ENCODE measurements at regions of chr3 and their contacts with region 1.

Region 1: DNA sequence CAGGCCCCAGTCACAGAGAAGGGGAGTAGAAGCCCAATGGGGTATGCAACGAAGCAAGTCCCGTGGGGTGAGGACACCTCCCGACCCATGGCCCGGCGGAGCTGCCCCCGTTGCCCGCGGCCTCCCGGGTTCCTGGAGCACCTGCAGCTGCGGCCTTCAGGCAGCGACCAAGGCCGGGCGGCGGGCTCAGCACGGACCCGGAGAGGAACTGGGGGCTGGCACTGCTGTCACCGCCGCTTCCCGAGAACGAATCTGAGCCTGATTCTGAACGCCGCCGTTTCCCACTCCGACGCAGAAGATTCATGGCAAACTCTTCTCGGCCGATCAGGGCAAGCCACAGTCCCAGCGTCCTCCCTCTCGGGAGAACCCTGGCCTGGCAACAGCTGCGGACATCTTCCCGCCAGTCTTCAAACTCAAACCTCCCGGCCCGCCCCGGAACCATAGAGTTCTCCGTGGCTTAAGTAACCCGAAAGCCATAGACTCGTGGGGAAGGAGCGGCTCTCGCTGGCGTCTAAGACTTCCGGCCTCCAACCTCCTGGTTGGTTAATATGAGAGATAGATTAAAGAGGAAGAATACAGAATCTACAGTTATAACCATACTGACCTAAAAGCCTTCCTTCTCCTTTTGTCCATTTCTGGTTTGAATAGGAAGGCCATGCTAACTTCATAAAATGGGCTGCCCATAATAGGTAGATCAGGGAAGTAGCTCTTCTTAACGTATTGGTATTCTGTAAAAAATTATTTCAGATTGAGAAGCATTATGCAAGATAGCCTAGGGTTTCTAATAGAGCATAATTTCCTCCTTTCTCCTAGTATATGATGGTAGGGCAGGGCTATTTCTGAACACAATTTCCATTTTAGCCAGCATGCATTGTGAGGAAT is at the start of gene POLQ:
- DNase-seq: peak; percentile 82 to 88
- ATAC-seq: peak; percentile 99
- H3K4me3 ChIP-seq: peak within 1 kb of the TSS; percentile 60 to 80 (median 68)
- H3K27ac ChIP-seq: peak within 1 kb of the TSS; percentile 70 to 87 (median 78)
- H3K4me1 ChIP-seq: peaks cover 3 to 7% of the 10 kb centered on the region in 2 donors
- H3K27me3 ChIP-seq: no peaks in the 10 kb centered on the region
- CTCF ChIP-seq: no peak
- POLR2A ChIP-seq: no peak
- total RNA-seq, gene POLQ: 0.07 to 0.24 (median 0.18) TPM in 3 of 4 donors, not detected in the other

Region 2: DNA sequence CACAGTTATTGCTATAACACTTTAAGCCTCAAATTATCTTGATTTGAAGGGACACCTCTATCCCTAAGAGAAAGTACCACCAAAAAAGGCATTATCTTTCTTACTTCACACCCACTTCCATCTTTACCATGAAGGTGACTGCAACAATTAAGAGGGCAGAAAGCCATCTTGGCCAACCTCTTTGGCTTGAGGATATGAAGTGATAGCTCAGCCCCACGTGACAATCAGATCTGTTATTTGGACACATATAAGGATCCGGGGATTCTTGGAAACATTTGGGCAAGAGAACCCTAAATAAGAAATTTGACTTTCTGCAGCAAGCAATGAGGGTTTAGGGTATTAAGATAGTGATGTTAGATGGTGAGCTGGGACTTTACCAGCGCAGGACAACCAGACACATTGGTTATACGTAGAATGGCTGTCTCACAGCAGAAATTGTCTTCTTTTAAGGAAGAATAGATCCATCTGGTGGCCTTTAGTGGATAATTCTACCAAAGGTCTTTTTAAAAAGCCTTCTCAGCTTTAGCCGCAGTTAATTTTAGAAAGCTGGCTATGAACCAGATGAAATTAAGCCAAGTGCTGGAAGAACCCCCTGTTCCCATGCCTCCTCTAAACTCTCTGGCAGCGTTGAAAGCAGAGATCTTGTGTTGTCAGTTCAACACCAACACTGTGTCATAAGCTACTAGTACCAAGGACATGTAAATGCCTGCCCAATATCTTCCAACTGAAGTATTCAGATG is 102.6 kb after region 1 on chr3:
- in situ Hi-C with region 1: no loop called
- intact Hi-C with region 1: loop called (anchors 1 kb)
- DNase-seq: peak; percentile 66 to 74
- ATAC-seq: peak; percentile 99
- H3K4me3 ChIP-seq: peak overlapping the region in 2 of 4 donors; percentile 16 to 21
- H3K27ac ChIP-seq: peak overlapping the region; percentile 83 to 87 (median 84)
- H3K4me1 ChIP-seq: peaks cover 17 to 21% of the 10 kb centered on the region in 2 donors
- H3K27me3 ChIP-seq: no peaks in the 10 kb centered on the region
- CTCF ChIP-seq: peak in 2 of 5 experiments; percentile 13 to 19
- POLR2A ChIP-seq: no peak

Region 3: DNA sequence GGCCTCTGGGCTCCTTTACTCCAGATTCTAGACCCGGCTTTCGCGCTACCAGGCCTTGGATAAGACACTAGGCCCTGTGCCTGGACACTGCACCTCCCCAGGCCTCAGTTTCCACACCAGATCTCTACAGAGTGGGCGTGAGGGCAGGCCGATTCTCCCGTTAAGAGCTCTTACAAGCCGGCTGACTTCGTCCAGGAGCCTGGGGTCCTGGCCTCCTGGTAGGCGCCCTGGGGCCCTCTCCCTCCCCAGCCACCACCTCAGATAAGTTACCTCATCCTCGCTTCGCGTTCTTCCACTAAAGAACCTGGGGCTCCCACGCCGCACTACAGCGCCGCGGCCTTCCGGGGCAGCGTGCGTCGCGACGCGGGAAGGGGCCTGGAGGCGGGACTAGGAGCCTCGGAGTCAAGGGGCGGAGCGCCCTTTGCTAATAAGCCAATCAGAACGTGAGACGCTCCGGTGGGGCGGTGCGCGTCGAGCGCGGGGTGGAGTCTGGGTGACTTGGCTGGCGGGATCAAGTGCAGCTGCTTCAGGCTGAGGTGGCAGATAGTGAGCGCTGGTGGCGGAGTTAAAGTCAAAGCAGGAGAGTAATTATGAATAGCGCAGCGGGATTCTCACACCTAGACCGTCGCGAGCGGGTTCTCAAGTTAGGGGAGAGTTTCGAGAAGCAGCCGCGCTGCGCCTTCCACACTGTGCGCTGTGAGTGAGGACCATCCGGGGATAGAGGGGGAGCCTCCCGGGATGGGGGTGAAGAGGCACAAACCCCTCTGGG is 289.1 kb after region 1 on chr3 and contains the starts of genes EAF2 and IQCB1:
- in situ Hi-C with region 1: loop called in 2 of 4 experiments (anchors 25 kb)
- intact Hi-C with region 1: loop called (anchors 2 kb)
- DNase-seq: peak; percentile 92 to 94
- ATAC-seq: peak; percentile 98 to 99
- H3K4me3 ChIP-seq: peak within 1 kb of the TSS; percentile 73 to 96 (median 77)
- H3K27ac ChIP-seq: peak within 1 kb of the TSS; percentile 80 to 91 (median 88)
- H3K4me1 ChIP-seq: peaks cover 13 to 22% of the 10 kb centered on the region in 2 donors
- H3K27me3 ChIP-seq: no peaks in the 10 kb centered on the region
- CTCF ChIP-seq: no peak
- POLR2A ChIP-seq: peak; percentile 79 to 92
- total RNA-seq, gene EAF2: 2.6 to 5.7 (median 3.6) TPM
- total RNA-seq, gene IQCB1: 8.8 to 14.0 (median 11.8) TPM

Region 4: DNA sequence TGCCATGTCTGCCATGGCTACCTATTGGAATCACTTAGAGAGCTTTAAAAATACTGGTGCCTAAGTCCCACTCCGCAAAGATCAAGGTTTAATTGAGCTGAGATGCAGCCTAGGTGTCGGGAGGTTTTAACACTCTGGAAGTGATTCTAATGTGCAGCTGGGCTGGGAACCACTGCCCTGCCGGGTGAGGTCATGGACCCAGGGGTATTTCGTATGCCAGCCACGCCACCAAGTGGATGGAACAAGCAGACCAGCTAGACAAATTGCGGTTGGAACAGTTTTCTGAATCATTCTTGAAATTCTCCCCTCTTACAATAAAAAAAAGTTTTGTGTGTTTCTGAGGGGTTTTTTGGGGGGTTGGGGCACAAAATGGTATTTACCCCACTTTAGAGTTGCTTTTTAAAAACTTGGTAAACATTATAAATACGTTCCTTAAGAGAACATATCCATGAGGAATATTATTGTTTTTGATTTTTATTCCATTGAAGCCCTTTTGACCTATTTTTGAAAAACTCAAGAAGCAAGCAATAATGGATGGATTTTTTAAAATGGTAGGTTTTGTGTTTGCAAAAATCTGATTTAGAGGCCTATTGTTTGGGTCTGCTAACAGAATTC is 713.0 kb after region 1 on chr3:
- in situ Hi-C with region 1: loop called in 2 of 4 experiments (anchors 5 to 10 kb)
- intact Hi-C with region 1: no loop called
- DNase-seq: peak; percentile 10 to 23
- ATAC-seq: peak in 1 of 2 donors; percentile 51
- H3K4me3 ChIP-seq: no peak overlapping the region
- H3K27ac ChIP-seq: no peak overlapping the region
- H3K4me1 ChIP-seq: peaks cover 0 to 5% of the 10 kb centered on the region in 2 donors
- H3K27me3 ChIP-seq: no peaks in the 10 kb centered on the region
- CTCF ChIP-seq: peak in 2 of 5 experiments; percentile 50 to 51
- POLR2A ChIP-seq: no peak

Region 5: GRCh38 chr3:122356415-122356814 is 810.6 kb after region 1 on chr3:
- in situ Hi-C with region 1: loop called in 2 of 4 experiments (anchors 25 kb)
- intact Hi-C with region 1: no loop called
- DNase-seq: no peak
- ATAC-seq: no peak
- H3K4me3 ChIP-seq: no peak overlapping the region
- H3K27ac ChIP-seq: no peak overlapping the region
- H3K4me1 ChIP-seq: no peaks in the 10 kb centered on the region
- H3K27me3 ChIP-seq: no peaks in the 10 kb centered on the region
- CTCF ChIP-seq: no peak
- POLR2A ChIP-seq: no peak

Region 6: DNA sequence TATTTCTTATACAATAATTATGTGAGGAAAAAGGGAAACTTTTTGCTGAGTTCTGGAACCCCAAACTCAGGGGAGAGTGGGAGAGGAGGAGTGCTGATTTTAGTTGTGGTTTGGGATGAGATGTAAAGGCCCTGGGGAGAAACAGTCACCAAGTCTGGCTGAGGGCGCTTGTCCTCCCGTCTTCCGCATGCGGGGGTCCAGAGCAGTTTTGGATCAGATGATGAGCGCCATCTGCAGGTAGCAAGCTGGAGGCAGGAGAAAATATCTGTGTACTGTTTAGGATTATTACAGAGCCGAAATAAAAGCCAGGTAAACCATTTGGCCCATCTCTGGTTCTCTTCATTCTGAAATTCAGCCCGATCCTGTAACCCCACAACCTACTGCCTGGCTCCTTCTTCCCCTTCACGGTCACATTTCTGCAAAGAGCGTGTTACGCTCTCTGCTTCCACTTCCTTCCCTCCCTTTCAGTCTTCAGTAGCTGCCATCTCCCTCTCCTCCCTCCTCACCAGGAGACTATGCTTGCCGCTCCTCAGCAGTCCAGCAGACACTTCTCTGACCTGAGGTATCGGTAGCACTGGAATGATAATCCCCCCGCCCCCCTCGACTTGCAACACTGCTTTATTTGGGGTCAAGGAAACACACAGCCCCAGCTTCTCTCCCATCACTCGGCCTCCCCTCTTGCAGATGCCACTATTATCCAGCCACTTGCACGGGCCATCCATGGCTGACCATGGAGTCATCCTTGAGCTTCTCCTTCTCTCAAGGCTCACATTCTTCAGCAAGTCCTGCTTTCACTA is 1133.5 kb after region 1 on chr3:
- in situ Hi-C with region 1: loop called in 2 of 4 experiments (anchors 10 to 25 kb)
- intact Hi-C with region 1: loop called (anchors 5 kb)
- DNase-seq: peak; percentile 39 to 68
- ATAC-seq: peak; percentile 51 to 74
- H3K4me3 ChIP-seq: peak overlapping the region; percentile 84 to 98 (median 98)
- H3K27ac ChIP-seq: peak overlapping the region; percentile 84 to 87 (median 86)
- H3K4me1 ChIP-seq: peaks cover 21 to 24% of the 10 kb centered on the region in 2 donors
- H3K27me3 ChIP-seq: no peaks in the 10 kb centered on the region
- CTCF ChIP-seq: peak; percentile 71 to 84 (median 80)
- POLR2A ChIP-seq: no peak